ENCODE measurements at regions of chr6 and their contacts with region 1.

Region 1: GRCh38 chr6:117449549-117450439 is 24.1 kb upstream of the ROS1 start:
- DNase-seq: peak; percentile 21
- H3K4me3 ChIP-seq: peak overlapping the region in 1 of 2 experiments; percentile 47; a peak in 2 of 4 replicates
- H3K27ac ChIP-seq: peak overlapping the region; percentile 90 to 96; a peak in 3 of 4 replicates
- H3K4me1 ChIP-seq: peaks cover 0 to 33% of the 10 kb centered on the region in 2 experiments; a peak in 3 of 4 replicates
- H3K27me3 ChIP-seq: no peaks in the 10 kb centered on the region
- CTCF ChIP-seq: peak; percentile 83
- EP300 ChIP-seq: no peak
- RAD21 ChIP-seq: peak; percentile 83

Region 2: GRCh38 chr6:117432273-117432672 is 17.5 kb before region 1 on chr6:
- CTCF ChIA-PET with region 1: interaction called, 10 read pairs
- POLR2A ChIA-PET with region 1: no interaction called
- DNase-seq: no peak
- H3K4me3 ChIP-seq: no peak overlapping the region
- H3K27ac ChIP-seq: no peak overlapping the region
- H3K4me1 ChIP-seq: no peaks in the 10 kb centered on the region
- H3K27me3 ChIP-seq: no peaks in the 10 kb centered on the region
- CTCF ChIP-seq: no peak
- EP300 ChIP-seq: no peak
- RAD21 ChIP-seq: no peak

Region 3: GRCh38 chr6:117463762-117464665 is 14.2 kb after region 1 on chr6:
- CTCF ChIA-PET with region 1: interaction called, 11 read pairs
- POLR2A ChIA-PET with region 1: no interaction called
- DNase-seq: no peak
- H3K4me3 ChIP-seq: peak overlapping the region in 1 of 2 experiments; percentile 56; a peak in 3 of 4 replicates
- H3K27ac ChIP-seq: peak overlapping the region; percentile 58 to 92
- H3K4me1 ChIP-seq: peaks cover 0 to 11% of the 10 kb centered on the region in 2 experiments; a peak in 3 of 4 replicates
- H3K27me3 ChIP-seq: no peaks in the 10 kb centered on the region
- CTCF ChIP-seq: no peak
- EP300 ChIP-seq: peak in 1 of 2 experiments; percentile 58; a peak in 1 of 4 replicates
- RAD21 ChIP-seq: no peak

Region 4: DNA sequence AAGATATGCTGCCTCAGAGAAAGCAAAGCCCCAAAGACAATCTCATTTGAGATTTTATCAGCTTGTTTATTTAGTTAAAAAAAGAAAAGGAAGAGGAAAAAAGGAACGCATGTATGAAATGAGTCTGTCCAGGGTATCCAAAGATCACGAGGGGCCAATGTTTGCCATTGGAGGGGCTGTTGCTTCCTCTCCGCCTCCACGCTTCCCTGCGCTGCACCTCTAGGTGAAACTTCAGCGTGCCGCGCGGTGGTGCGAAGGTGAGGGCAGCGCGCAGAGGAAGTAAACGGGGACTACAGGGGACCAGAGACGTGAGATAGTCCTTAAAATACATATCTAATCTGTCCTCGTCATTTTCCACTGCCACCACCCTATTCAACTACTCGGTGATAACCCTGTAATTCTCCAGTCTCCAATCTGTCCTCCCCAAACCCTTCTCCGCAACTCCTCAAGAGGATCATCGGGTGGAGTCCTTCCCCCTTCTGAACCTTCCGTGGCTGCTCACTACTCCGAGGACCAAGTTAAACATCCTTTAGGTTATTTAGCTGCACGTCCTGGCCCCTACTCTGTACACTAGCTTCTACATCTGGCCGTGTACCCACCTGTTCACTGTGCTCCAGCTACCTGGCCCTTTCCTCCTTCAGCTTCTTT is 31.6 kb after region 1 on chr6:
- CTCF ChIA-PET with region 1: interaction called, 10 read pairs
- POLR2A ChIA-PET with region 1: no interaction called
- DNase-seq: no peak
- H3K4me3 ChIP-seq: no peak overlapping the region
- H3K27ac ChIP-seq: peak overlapping the region in 1 of 2 experiments; percentile 75; a peak in 2 of 4 replicates
- H3K4me1 ChIP-seq: peaks cover 0 to 4% of the 10 kb centered on the region in 2 experiments; a peak in 2 of 4 replicates
- H3K27me3 ChIP-seq: no peaks in the 10 kb centered on the region
- CTCF ChIP-seq: no peak
- EP300 ChIP-seq: no peak
- RAD21 ChIP-seq: no peak

Region 5: GRCh38 chr6:117547688-117548621 is 98.2 kb after region 1 on chr6:
- CTCF ChIA-PET with region 1: interaction called, 78 read pairs
- POLR2A ChIA-PET with region 1: no interaction called
- DNase-seq: peak; percentile 80
- H3K4me3 ChIP-seq: peak overlapping the region; percentile 2 to 40; a peak in 3 of 4 replicates
- H3K27ac ChIP-seq: peak overlapping the region; percentile 62 to 77
- H3K4me1 ChIP-seq: peaks cover 11 to 38% of the 10 kb centered on the region in 2 experiments
- H3K27me3 ChIP-seq: no peaks in the 10 kb centered on the region
- CTCF ChIP-seq: peak; percentile 21
- EP300 ChIP-seq: no peak
- RAD21 ChIP-seq: no peak

Region 6: GRCh38 chr6:117555882-117556498 is 106.2 kb after region 1 on chr6:
- CTCF ChIA-PET with region 1: interaction called, 78 read pairs
- POLR2A ChIA-PET with region 1: no interaction called
- DNase-seq: no peak
- H3K4me3 ChIP-seq: no peak overlapping the region; a peak in 1 of 4 replicates
- H3K27ac ChIP-seq: peak overlapping the region in 1 of 2 experiments; percentile 51; a peak in 3 of 4 replicates
- H3K4me1 ChIP-seq: peaks cover 0 to 7% of the 10 kb centered on the region in 2 experiments; a peak in 2 of 4 replicates
- H3K27me3 ChIP-seq: no peaks in the 10 kb centered on the region
- CTCF ChIP-seq: peak; percentile 90
- EP300 ChIP-seq: no peak
- RAD21 ChIP-seq: peak; percentile 69

Region 7: GRCh38 chr6:117602151-117602898 is 152.5 kb after region 1 on chr6 and contains the start of gene GOPC:
- CTCF ChIA-PET with region 1: interaction called, 108 read pairs
- POLR2A ChIA-PET with region 1: no interaction called
- DNase-seq: peak; percentile 95
- H3K4me3 ChIP-seq: peak within 1 kb of the TSS; percentile 66 to 91
- H3K27ac ChIP-seq: peak within 1 kb of the TSS; percentile 86 to 99
- H3K4me1 ChIP-seq: peaks cover 0 to 11% of the 10 kb centered on the region in 2 experiments; a peak in 2 of 4 replicates
- H3K27me3 ChIP-seq: no peaks in the 10 kb centered on the region
- CTCF ChIP-seq: peak; percentile 32
- EP300 ChIP-seq: no peak
- RAD21 ChIP-seq: no peak
- polyA plus RNA-seq, gene GOPC: 20.8 and 31.4 TPM in 2 replicates